Prostate gland (tissue), 2 donors: ENCODE measurements at regions of chr12 and their contacts with region 1.

Region 1: DNA sequence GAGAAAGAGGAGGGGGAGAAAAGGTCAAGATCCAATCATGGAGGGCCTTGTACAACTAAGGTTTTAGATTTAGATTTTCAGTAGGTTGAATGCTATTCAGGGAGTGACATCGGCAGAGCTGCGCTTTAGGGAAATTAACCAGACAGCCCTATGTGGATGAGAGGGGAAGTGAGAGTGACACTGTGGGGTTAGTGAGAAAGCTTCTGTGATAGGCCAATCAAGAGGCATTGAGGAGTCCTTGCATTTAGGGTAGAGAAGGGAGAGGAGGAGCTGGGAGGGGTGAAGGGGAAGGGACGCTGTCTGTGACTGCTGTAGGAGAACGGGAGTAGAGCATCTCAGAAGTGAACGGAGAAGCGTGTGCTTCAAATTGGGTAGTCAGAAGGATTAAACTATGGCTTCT is 3.4 kb downstream of the HSD17B6 start:
- DNase-seq: no peak
- H3K4me3 ChIP-seq: no peak overlapping the region
- H3K27ac ChIP-seq: peak overlapping the region in 1 of 2 donors; percentile 56
- H3K4me1 ChIP-seq: peaks cover 6% of the 10 kb centered on the region
- H3K27me3 ChIP-seq: no peaks in the 10 kb centered on the region
- CTCF ChIP-seq: no peak
- POLR2A ChIP-seq: no peak

Region 2: GRCh38 chr12:56630160-56630632 is 136.3 kb before region 1 on chr12 and contains the start of gene BAZ2A:
- intact Hi-C with region 1: no loop called
- DNase-seq: peak; percentile 92
- H3K4me3 ChIP-seq: peak within 1 kb of the TSS; percentile 99
- H3K27ac ChIP-seq: peak within 1 kb of the TSS; percentile 98
- H3K4me1 ChIP-seq: peaks cover 21% of the 10 kb centered on the region
- H3K27me3 ChIP-seq: no peaks in the 10 kb centered on the region
- CTCF ChIP-seq: no peak
- POLR2A ChIP-seq: peak; percentile 41
- total RNA-seq, gene BAZ2A: 48.7 to 143 TPM

Region 3: DNA sequence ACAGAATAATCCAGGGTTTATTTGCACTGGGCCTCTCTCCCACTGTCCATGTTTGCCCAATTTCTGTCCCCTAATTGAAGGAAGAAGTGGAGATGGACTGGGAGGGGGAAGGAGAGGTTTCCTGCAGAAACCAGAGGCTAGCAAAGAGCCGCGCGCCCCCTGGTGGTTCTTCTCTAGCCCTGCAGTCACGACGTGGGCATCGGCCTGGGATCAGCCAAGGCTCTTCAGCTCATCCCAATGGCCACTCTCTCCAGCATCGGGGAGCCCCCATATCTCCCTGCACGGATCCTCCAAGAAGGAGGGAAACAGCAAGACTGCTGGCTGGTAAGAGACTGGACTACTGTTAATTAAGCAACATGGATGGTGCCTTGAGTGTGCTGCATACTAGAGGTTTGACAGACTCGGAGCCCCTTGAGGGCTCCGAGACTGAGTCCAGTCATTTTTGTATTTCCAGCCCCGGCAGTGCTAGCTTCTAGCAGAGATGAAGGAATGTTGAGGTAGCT is 221.1 kb after region 1 on chr12:
- intact Hi-C with region 1: loop called (anchors 2 kb)
- DNase-seq: peak; percentile 80
- H3K4me3 ChIP-seq: no peak overlapping the region
- H3K27ac ChIP-seq: no peak overlapping the region
- H3K4me1 ChIP-seq: no peaks in the 10 kb centered on the region
- H3K27me3 ChIP-seq: no peaks in the 10 kb centered on the region
- CTCF ChIP-seq: peak; percentile 95 to 98 (median 97)
- POLR2A ChIP-seq: no peak

Region 4: GRCh38 chr12:57046947-57047890 is 280.7 kb after region 1 on chr12:
- intact Hi-C with region 1: no loop called
- DNase-seq: no peak
- H3K4me3 ChIP-seq: no peak overlapping the region
- H3K27ac ChIP-seq: no peak overlapping the region
- H3K4me1 ChIP-seq: no peaks in the 10 kb centered on the region
- H3K27me3 ChIP-seq: no peaks in the 10 kb centered on the region
- CTCF ChIP-seq: no peak
- POLR2A ChIP-seq: no peak

Region 5: DNA sequence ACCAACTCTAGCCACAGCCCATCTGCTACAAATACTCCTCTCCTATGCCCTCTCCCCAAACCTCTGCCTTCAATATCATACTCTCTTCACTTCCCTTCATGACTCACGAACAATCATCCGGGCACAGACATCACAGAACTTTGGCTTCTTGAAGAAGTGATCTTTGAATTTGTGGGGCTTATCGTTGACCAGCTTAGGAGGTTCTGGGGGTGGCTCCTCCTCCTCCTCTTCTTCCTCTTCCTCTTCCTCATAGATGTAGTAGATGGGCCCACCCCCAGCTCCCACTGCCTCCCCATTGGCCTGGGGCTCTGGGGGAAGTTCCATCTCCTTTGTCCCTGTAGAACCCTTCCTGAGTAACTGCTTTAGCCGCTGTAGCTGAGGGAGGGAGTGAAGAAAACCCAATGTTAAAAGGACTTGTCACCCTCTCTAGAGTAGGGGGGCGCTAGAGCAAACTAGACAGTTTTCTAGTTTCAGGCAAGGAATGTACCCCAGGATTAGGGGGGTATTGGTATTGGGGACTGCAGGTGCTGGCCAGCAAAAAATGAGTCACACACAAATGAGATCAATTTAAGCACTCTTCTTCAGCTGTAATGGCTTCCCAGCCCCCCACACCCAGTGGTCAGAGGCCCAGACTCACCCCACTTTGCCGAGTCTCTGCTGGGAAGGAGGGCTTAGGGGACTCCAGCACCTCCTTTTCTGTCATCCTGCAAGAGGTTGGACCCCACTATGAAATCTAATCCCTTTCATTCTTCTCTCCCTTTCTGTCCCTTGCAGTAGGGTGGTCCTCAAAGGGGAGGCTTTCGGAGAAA is 482.6 kb after region 1 on chr12:
- intact Hi-C with region 1: loop called (anchors 5 kb)
- DNase-seq: no peak
- H3K4me3 ChIP-seq: no peak overlapping the region
- H3K27ac ChIP-seq: no peak overlapping the region
- H3K4me1 ChIP-seq: no peaks in the 10 kb centered on the region
- H3K27me3 ChIP-seq: no peaks in the 10 kb centered on the region
- CTCF ChIP-seq: no peak
- POLR2A ChIP-seq: no peak